ENCODE measurements at regions of chr10 and their contacts with region 1.

Region 1: DNA sequence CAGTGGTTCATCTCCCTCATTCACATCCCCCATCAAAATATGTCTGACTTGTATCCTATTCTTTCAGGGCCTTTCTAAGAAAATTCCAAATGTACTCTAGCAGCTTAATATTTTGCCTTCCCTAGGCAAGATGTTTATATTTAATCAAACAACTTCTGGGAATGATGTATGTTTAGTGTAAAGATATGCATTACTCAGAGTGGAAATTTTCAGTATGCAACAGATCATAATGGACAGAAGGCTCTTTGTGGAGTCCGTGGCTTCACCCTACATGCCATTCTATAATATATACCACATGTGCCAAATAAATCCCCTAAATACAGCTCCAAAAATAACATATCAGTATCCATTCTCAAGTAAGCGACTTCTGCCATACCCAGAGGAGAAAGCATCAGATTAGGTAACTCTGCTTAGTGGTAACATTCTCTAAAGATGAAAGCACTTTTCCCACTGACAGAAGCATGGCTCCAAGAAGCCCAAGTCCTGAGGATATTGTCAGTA is 316.6 kb downstream of the KCNMA1 start:
- DNase-seq: peak; percentile 97
- H3K4me3 ChIP-seq: no peak overlapping the region
- CTCF ChIP-seq: no peak

Region 2: GRCh38 chr10:77290528-77291155 is 30.4 kb before region 1 on chr10:
- CTCF ChIA-PET with region 1: no interaction called
- POLR2A ChIA-PET with region 1: interaction called, 11 read pairs
- DNase-seq: peak; percentile 97
- H3K4me3 ChIP-seq: no peak overlapping the region
- CTCF ChIP-seq: no peak

Region 3: DNA sequence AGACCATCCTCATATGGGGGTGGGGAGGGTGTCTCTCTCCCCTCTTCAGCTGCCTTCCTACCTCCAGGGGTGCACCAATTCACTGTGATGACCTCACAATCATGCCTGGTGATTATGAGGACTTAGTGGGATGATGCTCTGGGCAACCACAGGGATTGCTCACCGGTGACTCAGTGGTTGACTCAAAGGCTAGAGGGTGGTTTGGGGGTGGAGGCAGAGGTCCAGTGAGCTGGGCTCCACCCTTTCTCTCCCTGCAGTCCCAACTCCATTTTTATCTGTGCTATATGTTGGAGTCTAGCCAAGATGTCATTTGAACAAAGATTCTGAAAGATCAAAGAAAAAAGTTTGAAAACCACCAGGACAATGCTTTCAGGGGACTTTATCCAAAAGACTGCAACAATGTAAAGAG is 29.7 kb after region 1 on chr10:
- CTCF ChIA-PET with region 1: interaction called, 4 read pairs
- POLR2A ChIA-PET with region 1: interaction called, 11 read pairs
- DNase-seq: peak; percentile 96
- H3K4me3 ChIP-seq: no peak overlapping the region
- CTCF ChIP-seq: peak; percentile 32

Region 4: GRCh38 chr10:77405771-77406241 is 84.8 kb after region 1 on chr10:
- CTCF ChIA-PET with region 1: no interaction called
- POLR2A ChIA-PET with region 1: no interaction called
- DNase-seq: no peak
- H3K4me3 ChIP-seq: no peak overlapping the region
- CTCF ChIP-seq: no peak

Measured in AG04449 (cell line).